Activated naive CD4-positive, alpha-beta T cell treated with anti-CD3 and anti-CD28 coated beads for 36 hours (primary cell): ENCODE measurements at regions of chr3 and their contacts with region 1.

Region 1: DNA sequence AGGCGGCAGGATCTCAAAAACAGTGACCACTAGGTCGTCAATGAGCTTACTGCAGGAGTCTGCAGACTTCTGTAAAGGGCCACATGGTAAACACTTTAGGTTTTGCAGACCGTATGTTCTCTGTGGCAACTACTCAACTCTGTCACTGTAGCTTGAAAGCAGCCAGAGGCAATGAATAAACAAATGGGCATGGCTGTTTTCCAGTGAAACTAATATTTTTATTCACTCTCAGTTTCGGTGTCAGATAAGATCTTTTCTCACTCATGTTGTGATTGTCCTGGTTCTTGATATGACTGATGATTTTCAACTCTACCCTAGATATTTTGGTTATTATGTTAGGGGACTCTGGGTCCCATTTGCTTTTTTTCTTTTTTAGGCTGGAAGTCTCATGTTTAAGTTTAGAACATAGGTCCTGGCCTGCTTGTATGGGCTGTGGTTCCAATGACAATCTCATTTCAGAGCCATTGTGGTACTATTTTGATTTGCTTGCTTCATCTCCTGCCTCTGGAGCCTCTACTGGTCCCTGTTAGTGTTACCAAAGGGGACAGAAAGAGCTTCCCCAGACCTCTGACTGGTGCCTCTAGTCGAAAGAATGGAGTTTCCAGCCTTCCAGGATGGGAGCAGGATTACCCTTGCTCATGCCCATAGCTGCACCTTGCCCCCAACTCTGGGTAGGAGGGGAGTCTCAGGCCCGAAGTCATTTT is 222.0 kb downstream of the STT3B start:
- DNase-seq: no peak
- H3K4me3 Mint-ChIP-seq: no peak overlapping the region
- H3K27ac Mint-ChIP-seq: peak overlapping the region; percentile 94
- H3K4me1 Mint-ChIP-seq: peaks cover 41% of the 10 kb centered on the region
- H3K27me3 Mint-ChIP-seq: peaks cover 2% of the 10 kb centered on the region

Region 2: GRCh38 chr3:30658328-30659052 is 1096.2 kb before region 1 on chr3:
- CTCF ChIA-PET with region 1: no interaction called
- intact Hi-C with region 1: loop called (anchors 10 kb)
- DNase-seq: peak; percentile 62
- H3K4me3 Mint-ChIP-seq: peak overlapping the region; percentile 62
- H3K27ac Mint-ChIP-seq: peak overlapping the region; percentile 97
- H3K4me1 Mint-ChIP-seq: peaks cover 98% of the 10 kb centered on the region
- H3K27me3 Mint-ChIP-seq: no peaks in the 10 kb centered on the region

Region 3: GRCh38 chr3:31213869-31214486 is 540.7 kb before region 1 on chr3:
- CTCF ChIA-PET with region 1: no interaction called
- intact Hi-C with region 1: loop called (anchors 2 kb)
- DNase-seq: peak; percentile 49
- H3K4me3 Mint-ChIP-seq: no peak overlapping the region
- H3K27ac Mint-ChIP-seq: peak overlapping the region; percentile 3
- H3K4me1 Mint-ChIP-seq: peaks cover 88% of the 10 kb centered on the region
- H3K27me3 Mint-ChIP-seq: no peaks in the 10 kb centered on the region

Region 4: GRCh38 chr3:31462050-31462569 is 292.6 kb before region 1 on chr3:
- CTCF ChIA-PET with region 1: no interaction called
- intact Hi-C with region 1: loop called (anchors 5 kb)
- DNase-seq: peak; percentile 56
- H3K4me3 Mint-ChIP-seq: peak overlapping the region; percentile 35
- H3K27ac Mint-ChIP-seq: peak overlapping the region; percentile 70
- H3K4me1 Mint-ChIP-seq: peaks cover 51% of the 10 kb centered on the region
- H3K27me3 Mint-ChIP-seq: no peaks in the 10 kb centered on the region

Region 5: GRCh38 chr3:31544634-31545033 is 210.1 kb before region 1 on chr3:
- CTCF ChIA-PET with region 1: no interaction called
- intact Hi-C with region 1: no loop called
- DNase-seq: no peak
- H3K4me3 Mint-ChIP-seq: no peak overlapping the region
- H3K27ac Mint-ChIP-seq: no peak overlapping the region
- H3K4me1 Mint-ChIP-seq: peaks cover 82% of the 10 kb centered on the region
- H3K27me3 Mint-ChIP-seq: no peaks in the 10 kb centered on the region

Region 6: GRCh38 chr3:31704591-31705179 is 50.0 kb before region 1 on chr3:
- CTCF ChIA-PET with region 1: no interaction called
- intact Hi-C with region 1: loop called (anchors 1 kb)
- DNase-seq: peak; percentile 74
- H3K4me3 Mint-ChIP-seq: peak overlapping the region; percentile 55
- H3K27ac Mint-ChIP-seq: peak overlapping the region; percentile 85
- H3K4me1 Mint-ChIP-seq: peaks cover 13% of the 10 kb centered on the region
- H3K27me3 Mint-ChIP-seq: peaks cover 7% of the 10 kb centered on the region

Region 7: DNA sequence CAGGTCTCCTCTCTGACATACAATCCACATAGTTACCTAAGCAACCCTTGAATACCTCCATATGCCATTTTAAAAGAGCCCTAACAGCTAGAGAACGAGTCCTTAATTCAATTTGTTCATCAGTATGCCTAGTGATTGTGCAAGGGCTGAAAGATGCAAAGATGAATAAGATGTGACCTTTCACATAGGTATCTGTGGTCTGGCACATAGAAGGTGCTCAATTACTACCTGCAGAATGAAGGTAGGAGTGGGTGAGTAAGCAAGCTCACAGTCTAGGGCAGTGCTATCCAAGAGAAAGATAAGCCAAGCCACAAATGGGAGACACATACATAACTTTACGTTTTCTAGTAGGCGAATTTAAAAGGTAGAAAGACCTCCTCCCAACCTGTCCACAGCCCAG is 68.5 kb after region 1 on chr3:
- CTCF ChIA-PET with region 1: no interaction called
- intact Hi-C with region 1: no loop called
- DNase-seq: no peak
- H3K4me3 Mint-ChIP-seq: no peak overlapping the region
- H3K27ac Mint-ChIP-seq: no peak overlapping the region
- H3K4me1 Mint-ChIP-seq: no peaks in the 10 kb centered on the region
- H3K27me3 Mint-ChIP-seq: peaks cover 7% of the 10 kb centered on the region

Region 8: GRCh38 chr3:31979006-31979697 is 224.4 kb after region 1 on chr3:
- CTCF ChIA-PET with region 1: no interaction called
- intact Hi-C with region 1: loop called (anchors 1 kb)
- DNase-seq: peak; percentile 37
- H3K4me3 Mint-ChIP-seq: peak overlapping the region; percentile 78
- H3K27ac Mint-ChIP-seq: peak overlapping the region; percentile 43
- H3K4me1 Mint-ChIP-seq: peaks cover 26% of the 10 kb centered on the region
- H3K27me3 Mint-ChIP-seq: peaks cover 49% of the 10 kb centered on the region